Gastrocnemius medialis (tissue), 4 donors: ENCODE measurements at regions of chr1 and their contacts with region 1.

Region 1: GRCh38 chr1:76074321-76075187 is at the start of gene ST6GALNAC3:
- DNase-seq: peak; percentile 46 to 57
- ATAC-seq: peak; percentile 92 to 96
- H3K4me3 ChIP-seq: peak within 1 kb of the TSS; percentile 55 to 80 (median 66)
- H3K27ac ChIP-seq: peak within 1 kb of the TSS; percentile 71 to 82 (median 80)
- H3K4me1 ChIP-seq: peaks cover 0 to 3% of the 10 kb centered on the region in 2 donors
- H3K27me3 ChIP-seq: no peaks in the 10 kb centered on the region
- CTCF ChIP-seq: no peak
- POLR2A ChIP-seq: peak; percentile 51 to 74
- total RNA-seq, gene ST6GALNAC3: 1.7 to 3.9 (median 2.8) TPM

Region 2: GRCh38 chr1:76124196-76124595 is 49.6 kb after region 1 on chr1:
- in situ Hi-C with region 1: no loop called
- intact Hi-C with region 1: loop called (anchors 5 kb)
- DNase-seq: no peak
- ATAC-seq: no peak
- H3K4me3 ChIP-seq: no peak overlapping the region
- H3K27ac ChIP-seq: no peak overlapping the region
- H3K4me1 ChIP-seq: peaks cover 9 to 15% of the 10 kb centered on the region in 2 donors
- H3K27me3 ChIP-seq: no peaks in the 10 kb centered on the region
- CTCF ChIP-seq: no peak
- POLR2A ChIP-seq: no peak

Region 3: DNA sequence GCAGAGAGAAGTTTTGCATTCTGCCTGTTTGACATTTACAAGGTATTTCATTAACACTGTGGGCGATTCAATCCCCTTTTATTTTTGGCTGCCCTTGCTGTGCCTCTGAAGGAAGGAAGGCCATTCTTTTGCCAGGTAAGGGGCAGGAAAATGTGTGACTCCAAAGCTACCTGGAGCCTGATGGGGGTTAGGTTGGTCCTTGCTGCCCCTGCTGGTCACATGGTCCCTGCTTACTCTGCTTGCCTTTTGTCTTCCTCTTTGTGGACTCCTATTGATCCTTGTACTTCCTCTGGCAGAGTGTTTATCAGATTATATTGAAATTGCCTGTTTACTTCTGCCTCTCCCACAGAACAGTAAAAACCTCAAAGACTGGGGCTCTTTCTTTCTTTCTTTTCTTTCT is 65.7 kb after region 1 on chr1:
- in situ Hi-C with region 1: no loop called
- intact Hi-C with region 1: loop called (anchors 5 kb)
- DNase-seq: no peak
- ATAC-seq: no peak
- H3K4me3 ChIP-seq: no peak overlapping the region
- H3K27ac ChIP-seq: peak overlapping the region; percentile 17 to 68 (median 60)
- H3K4me1 ChIP-seq: peaks cover 0 to 6% of the 10 kb centered on the region in 2 donors
- H3K27me3 ChIP-seq: no peaks in the 10 kb centered on the region
- CTCF ChIP-seq: no peak
- POLR2A ChIP-seq: no peak

Region 4: DNA sequence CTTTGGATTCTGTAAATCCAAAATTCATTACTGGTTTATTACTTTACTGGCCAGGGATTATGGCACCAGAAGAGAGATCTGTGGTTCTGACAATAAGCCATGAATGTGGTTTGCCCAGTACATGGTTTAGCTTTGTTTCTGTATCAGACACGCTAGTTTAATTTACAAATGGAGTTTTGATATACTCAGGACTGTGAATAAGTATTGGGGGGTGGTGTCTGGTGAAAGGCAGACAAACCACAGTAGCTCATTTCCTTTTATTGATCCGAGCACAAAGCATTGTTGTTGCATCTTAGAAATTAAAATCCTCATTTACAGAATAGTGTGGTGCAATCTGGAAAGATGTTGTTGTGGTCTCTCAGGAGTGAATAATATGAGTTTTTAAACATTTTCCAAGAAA is 96.0 kb after region 1 on chr1:
- in situ Hi-C with region 1: no loop called
- intact Hi-C with region 1: no loop called
- DNase-seq: no peak
- ATAC-seq: no peak
- H3K4me3 ChIP-seq: no peak overlapping the region
- H3K27ac ChIP-seq: no peak overlapping the region
- H3K4me1 ChIP-seq: no peaks in the 10 kb centered on the region
- H3K27me3 ChIP-seq: no peaks in the 10 kb centered on the region
- CTCF ChIP-seq: no peak
- POLR2A ChIP-seq: no peak

Region 5: DNA sequence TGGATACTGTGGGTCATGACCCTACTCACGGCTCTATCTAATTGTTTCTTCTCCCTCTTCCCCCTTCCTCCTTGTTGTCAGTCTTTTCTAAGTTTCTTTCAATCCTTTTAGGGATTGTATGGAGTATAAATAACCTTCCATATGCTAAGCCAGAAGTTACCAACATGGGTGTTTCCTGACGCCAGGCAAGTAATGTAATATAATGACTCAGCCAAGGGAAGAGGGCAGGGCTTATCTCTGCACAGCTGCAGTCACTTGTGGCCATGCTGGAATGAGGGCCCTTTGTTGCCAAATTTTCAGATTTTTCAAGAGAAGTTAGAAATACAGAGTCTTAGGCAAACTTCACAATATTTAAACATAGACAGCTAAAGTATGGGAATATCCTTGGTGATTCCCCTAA is 194.6 kb after region 1 on chr1:
- in situ Hi-C with region 1: no loop called
- intact Hi-C with region 1: no loop called
- DNase-seq: no peak
- ATAC-seq: no peak
- H3K4me3 ChIP-seq: no peak overlapping the region
- H3K27ac ChIP-seq: no peak overlapping the region
- H3K4me1 ChIP-seq: no peaks in the 10 kb centered on the region
- H3K27me3 ChIP-seq: no peaks in the 10 kb centered on the region
- CTCF ChIP-seq: no peak
- POLR2A ChIP-seq: no peak